Mammary epithelial cell (primary cell): ENCODE measurements at regions of chr2 and their contacts with region 1.

Region 1: DNA sequence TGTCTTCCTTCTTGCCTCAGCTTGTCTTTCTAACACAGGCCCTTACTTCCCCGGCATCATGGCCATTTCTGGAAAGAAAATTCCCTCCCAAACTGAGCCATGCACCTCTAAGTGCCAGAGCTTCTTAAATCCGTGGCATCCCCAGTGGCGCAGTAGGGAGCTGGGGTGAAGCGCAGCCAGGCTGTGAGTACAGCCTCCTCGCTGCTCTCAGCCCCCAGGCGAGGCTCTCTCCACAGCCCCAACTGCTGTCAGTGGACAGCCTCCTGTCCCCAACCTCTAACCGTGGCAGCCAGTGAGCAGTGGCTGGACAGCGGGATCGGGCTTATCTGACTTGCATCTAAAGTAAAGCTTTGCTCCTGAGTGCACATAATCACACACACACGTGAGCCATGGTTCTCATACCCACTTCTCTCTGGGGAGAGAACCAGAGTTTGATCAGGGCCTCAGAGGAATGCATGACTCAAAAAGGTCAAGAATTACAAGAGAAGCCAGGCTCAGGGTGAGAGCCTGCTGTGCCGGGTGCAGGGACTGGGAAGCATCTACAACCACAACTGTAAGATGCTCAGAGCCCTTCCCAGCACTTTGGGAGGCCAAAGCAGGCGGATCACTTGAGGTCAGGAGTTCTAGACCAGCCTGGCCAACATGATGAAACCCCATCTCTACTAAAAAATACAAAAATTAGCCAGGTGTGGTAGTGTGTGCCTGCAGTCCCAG is 50.7 kb downstream of the SFXN5 start:
- DNase-seq: no peak
- H3K4me3 ChIP-seq: no peak overlapping the region
- H3K27ac ChIP-seq: no peak overlapping the region
- H3K4me1 ChIP-seq: peaks cover 6% of the 10 kb centered on the region
- H3K27me3 ChIP-seq: no peaks in the 10 kb centered on the region
- CTCF ChIP-seq: no peak

Region 2: DNA sequence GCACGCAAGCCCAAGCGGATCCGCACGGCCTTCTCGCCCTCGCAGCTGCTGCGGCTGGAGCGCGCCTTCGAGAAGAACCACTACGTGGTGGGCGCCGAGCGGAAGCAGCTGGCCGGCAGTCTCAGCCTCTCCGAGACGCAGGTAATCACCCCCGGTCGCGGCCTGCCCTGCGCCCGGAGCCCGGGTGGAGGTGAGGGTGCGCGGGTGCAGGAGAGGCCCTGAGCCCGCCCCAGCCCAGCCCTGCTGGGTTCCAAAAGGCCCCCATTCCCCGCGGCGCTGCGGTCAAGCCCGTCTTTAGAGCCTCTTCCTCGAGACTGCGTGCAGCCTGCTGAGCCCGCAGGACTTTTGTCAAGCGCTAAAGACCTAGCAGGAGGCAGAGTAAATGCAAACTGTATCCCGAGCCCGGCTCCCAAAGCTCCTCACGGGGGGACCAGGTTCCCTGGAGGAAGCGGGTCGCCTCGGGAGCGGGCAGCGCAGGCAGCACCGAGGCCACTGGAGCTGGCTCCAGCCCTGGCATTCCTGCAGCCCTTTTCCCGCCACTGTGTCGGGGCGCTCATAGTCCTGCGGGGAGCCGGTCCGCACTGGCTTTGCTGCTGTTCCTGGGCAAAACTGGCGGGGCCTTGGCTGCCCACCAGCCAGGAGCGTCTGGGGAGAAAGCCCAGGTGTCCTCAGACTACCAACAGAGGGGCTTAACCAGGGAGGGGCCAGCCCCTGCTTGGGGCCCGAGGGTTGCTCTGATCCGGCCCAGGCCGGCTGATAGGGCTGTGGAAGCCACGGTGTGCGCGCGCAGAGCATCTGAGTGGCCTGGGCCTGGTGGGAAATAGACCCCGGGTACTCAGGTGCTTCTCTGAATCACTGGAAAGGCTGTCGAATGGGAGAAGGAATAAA is 96.2 kb before region 1 on chr2:
- CTCF ChIA-PET with region 1: no interaction called
- dilution Hi-C with region 1: loop called (anchors 5 kb)
- in situ Hi-C with region 1: no loop called
- intact Hi-C with region 1: no loop called
- DNase-seq: no peak
- H3K4me3 ChIP-seq: no peak overlapping the region
- H3K27ac ChIP-seq: no peak overlapping the region
- H3K4me1 ChIP-seq: peaks cover 14% of the 10 kb centered on the region
- H3K27me3 ChIP-seq: peaks cover 65% of the 10 kb centered on the region
- CTCF ChIP-seq: no peak